Natural killer cell (primary cell): ENCODE measurements at regions of chr17 and their contacts with region 1.

Region 1: GRCh38 chr17:76182016-76182764 is 41.1 kb upstream of the FOXJ1 start:
- DNase-seq: peak; percentile 92 to 97
- ATAC-seq: peak; percentile 93 to 99 (median 96)
- H3K4me3 ChIP-seq: no peak overlapping the region
- H3K4me3 Mint-ChIP-seq: peak overlapping the region; percentile 13
- H3K27ac ChIP-seq: peak overlapping the region; percentile 19
- H3K27ac Mint-ChIP-seq: peak overlapping the region; percentile 68 to 79
- H3K4me1 ChIP-seq: peaks cover 13% of the 10 kb centered on the region
- H3K4me1 Mint-ChIP-seq: peaks cover 14% of the 10 kb centered on the region in 2 donors
- H3K27me3 ChIP-seq: no peaks in the 10 kb centered on the region
- H3K27me3 Mint-ChIP-seq: no peaks in the 10 kb centered on the region
- CTCF ChIP-seq: peak; percentile 73

Region 2: GRCh38 chr17:76121932-76122430 is 60.2 kb before region 1 on chr17:
- intact Hi-C with region 1: loop called (anchors 1 kb)
- DNase-seq: peak in 1 of 2 donors; percentile 38
- ATAC-seq: peak; percentile 28 to 36 (median 31)
- H3K4me3 ChIP-seq: peak overlapping the region; percentile 49
- H3K4me3 Mint-ChIP-seq: peak overlapping the region; percentile 58
- H3K27ac ChIP-seq: no peak overlapping the region
- H3K27ac Mint-ChIP-seq: peak overlapping the region in 1 of 2 donors; percentile 82
- H3K4me1 ChIP-seq: peaks cover 14% of the 10 kb centered on the region
- H3K4me1 Mint-ChIP-seq: peaks cover 0 to 19% of the 10 kb centered on the region in 2 donors
- H3K27me3 ChIP-seq: no peaks in the 10 kb centered on the region
- H3K27me3 Mint-ChIP-seq: no peaks in the 10 kb centered on the region
- CTCF ChIP-seq: no peak

Region 3: GRCh38 chr17:76141212-76142038 is 40.8 kb before region 1 on chr17 and contains the start of gene FOXJ1:
- intact Hi-C with region 1: loop called (anchors 2 kb)
- DNase-seq: peak; percentile 94 to 96
- ATAC-seq: peak; percentile 74 to 82 (median 80)
- H3K4me3 ChIP-seq: peak within 1 kb of the TSS; percentile 48
- H3K4me3 Mint-ChIP-seq: peak within 1 kb of the TSS; percentile 82
- H3K27ac ChIP-seq: no peak within 1 kb of the TSS
- H3K27ac Mint-ChIP-seq: peak within 1 kb of the TSS; percentile 94 to 95
- H3K4me1 ChIP-seq: peaks cover 64% of the 10 kb centered on the region
- H3K4me1 Mint-ChIP-seq: peaks cover 47 to 61% of the 10 kb centered on the region in 2 donors
- H3K27me3 ChIP-seq: peaks cover 18% of the 10 kb centered on the region
- H3K27me3 Mint-ChIP-seq: peaks cover 0 to 7% of the 10 kb centered on the region in 2 donors
- CTCF ChIP-seq: no peak
- total RNA-seq, gene FOXJ1: 0.21 to 0.93 (median 0.36) TPM

Region 4: GRCh38 chr17:76278952-76279741 is 97.0 kb after region 1 on chr17:
- intact Hi-C with region 1: loop called (anchors 1 kb)
- DNase-seq: peak; percentile 87 to 90
- ATAC-seq: peak; percentile 80 to 95 (median 80)
- H3K4me3 ChIP-seq: no peak overlapping the region
- H3K4me3 Mint-ChIP-seq: no peak overlapping the region
- H3K27ac ChIP-seq: no peak overlapping the region
- H3K27ac Mint-ChIP-seq: no peak overlapping the region
- H3K4me1 ChIP-seq: peaks cover 12% of the 10 kb centered on the region
- H3K4me1 Mint-ChIP-seq: peaks cover 0 to 4% of the 10 kb centered on the region in 2 donors
- H3K27me3 ChIP-seq: no peaks in the 10 kb centered on the region
- H3K27me3 Mint-ChIP-seq: no peaks in the 10 kb centered on the region
- CTCF ChIP-seq: peak; percentile 96

Region 5: DNA sequence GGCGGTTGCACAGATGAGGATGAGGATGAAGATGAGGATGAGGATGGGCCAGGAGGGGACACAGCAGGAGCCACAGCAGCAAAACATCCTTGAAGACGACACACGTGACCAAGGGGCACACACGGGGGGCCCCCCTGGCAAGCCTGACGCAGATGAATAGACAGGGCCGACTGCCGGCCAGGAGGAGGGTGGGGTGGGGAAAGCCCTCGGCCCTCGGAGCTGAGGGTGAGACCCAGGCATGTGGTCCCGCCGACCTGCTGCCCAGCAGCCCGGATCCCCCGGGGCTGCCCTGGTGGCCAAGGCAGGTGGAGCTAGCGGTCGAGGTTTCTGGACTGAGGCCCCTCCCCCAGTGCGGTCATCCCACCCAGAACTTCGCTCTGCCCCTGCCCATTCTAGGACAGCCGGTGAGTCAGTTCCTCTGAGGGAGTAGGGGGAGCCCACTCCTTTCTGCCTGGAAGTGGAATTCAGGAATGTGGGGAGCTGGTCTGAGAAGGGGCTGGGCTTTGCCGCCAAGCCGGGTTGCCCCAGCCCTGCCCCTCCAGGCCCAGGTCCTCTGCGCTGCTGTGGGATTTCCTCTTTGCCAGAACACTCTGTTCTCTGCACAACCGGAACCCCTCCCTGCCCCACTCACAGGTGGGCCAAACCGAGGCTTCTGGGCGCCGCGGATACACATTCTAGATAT is 345.4 kb after region 1 on chr17:
- intact Hi-C with region 1: no loop called
- DNase-seq: peak; percentile 44 to 77
- ATAC-seq: peak; percentile 67 to 71 (median 68)
- H3K4me3 ChIP-seq: peak overlapping the region; percentile 36
- H3K4me3 Mint-ChIP-seq: peak overlapping the region; percentile 14
- H3K27ac ChIP-seq: peak overlapping the region; percentile 83
- H3K27ac Mint-ChIP-seq: peak overlapping the region; percentile 0 to 75
- H3K4me1 ChIP-seq: peaks cover 57% of the 10 kb centered on the region
- H3K4me1 Mint-ChIP-seq: peaks cover 25 to 45% of the 10 kb centered on the region in 2 donors
- H3K27me3 ChIP-seq: no peaks in the 10 kb centered on the region
- H3K27me3 Mint-ChIP-seq: no peaks in the 10 kb centered on the region
- CTCF ChIP-seq: no peak